ENCODE measurements at regions of chr1 and their contacts with region 1.

Region 1: DNA sequence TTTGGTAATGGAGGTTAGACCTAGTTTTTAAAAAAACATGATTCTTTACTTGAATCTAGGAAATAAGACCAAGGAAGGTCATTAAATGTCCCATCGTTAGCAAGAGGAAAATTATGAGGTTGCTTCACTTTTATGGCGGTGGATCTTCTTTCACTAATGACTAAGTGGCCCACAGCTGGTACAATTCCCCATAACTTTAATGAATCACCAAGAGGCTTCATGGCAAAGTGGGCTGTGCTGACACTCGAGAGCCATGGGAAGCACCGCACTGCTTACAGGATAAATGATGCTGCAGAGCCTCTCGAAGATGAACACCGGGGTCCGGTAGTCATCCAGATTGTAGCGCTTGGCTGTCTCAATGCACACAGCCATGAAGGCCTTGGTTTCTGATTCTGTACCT is 108.8 kb downstream of the UBR4 start:
- DNase-seq: no peak
- CTCF ChIP-seq: no peak

Region 2: DNA sequence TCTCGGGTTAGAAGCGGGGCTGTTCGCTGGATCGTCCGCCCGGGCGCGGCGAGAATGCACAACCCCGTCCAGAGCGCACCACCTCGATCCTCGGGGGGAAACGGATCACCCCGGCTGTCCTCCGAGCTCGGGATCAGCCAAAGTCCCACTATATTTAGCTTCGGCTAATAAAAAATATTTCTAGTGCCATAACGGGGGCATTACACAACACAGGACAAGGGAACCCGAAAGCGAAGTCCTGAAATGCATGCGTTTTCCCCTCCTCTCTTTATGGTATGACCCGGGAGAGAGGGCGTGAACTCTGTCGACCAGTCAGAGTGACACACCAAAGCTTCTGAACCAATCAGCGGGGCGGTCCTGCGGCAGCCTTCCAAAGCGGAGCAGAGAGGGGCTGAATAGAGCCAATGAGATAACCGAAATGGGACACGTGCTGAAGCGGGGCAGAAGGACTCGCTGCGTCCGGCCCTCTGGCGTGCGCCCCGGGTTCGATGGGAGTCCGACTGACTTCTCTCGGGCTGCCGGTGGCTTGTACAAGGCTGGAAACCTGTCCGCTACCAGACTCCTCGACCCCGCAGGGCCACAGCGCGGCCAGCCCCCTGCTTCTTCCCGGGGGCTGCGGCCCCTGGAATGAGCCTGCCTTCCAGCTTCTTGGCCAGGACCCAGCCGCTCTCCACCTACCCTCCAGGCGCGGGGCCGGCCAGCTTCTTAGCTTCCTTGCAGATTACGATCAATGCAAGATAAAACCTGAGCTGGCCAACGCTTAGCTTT is 198.5 kb before region 1 on chr1 and contains the start of gene ALDH4A1:
- in situ Hi-C with region 1: loop called (anchors 10 kb)
- DNase-seq: peak; percentile 99
- CTCF ChIP-seq: no peak

Region 3: DNA sequence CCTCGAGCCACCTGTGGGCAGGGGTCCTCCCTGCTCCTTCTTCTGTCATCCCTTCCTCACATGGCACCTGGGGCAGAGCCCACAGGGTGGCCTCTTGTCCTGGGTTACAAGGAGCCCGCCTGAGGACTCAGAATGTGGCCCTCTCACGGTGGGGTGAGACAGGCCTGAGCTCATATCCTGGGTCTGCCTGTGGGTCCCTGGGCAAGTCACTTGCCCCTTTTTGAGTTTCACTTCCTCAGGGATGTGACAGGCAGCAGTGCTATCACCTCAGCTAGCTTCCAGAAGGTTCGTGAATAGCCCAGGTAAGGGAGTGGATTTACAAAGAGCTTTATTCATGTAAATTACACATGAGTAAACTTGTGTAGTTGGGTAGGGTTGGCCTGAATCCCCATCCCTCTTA is 596.9 kb after region 1 on chr1:
- in situ Hi-C with region 1: no loop called
- DNase-seq: no peak
- CTCF ChIP-seq: no peak